Adrenal gland (tissue), 19 donors: ENCODE measurements at regions of chr1 and their contacts with region 1.

Region 1: DNA sequence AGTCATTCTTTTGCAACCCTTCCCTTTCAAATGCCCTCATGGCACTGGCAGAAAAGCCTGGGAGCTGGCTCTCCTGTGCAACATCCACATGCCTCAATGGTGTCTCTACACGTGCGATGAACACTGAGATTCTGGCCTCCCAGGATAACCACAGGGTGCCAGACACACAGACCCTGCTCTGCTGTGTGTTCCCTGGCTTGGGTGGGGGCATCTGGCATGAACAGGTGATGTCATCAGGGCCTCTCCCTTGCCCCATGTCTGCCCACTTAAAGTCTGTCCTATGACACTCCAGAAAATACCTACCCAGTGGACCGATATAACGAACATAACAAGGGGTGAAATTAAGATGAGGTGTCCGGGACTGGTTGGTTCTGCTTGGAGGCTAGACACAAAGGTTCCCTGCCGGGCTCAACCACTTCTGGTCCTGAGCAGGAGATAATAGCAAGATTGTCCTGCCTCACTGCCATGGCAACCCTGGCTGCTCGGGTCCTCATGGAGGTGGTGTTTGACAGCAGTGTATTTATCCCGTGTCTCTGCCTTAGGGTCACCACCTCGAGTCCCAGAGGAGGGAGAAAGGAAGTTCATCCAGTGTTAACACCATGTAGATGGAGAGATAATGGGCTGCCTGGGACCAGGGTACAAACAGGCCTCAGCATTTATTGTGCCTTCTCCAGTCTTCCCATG is 19.3 kb downstream of the INSRR start:
- DNase-seq: no peak
- H3K4me3 ChIP-seq: no peak overlapping the region
- H3K27ac ChIP-seq: no peak overlapping the region
- H3K4me1 ChIP-seq: no peaks in the 10 kb centered on the region
- H3K27me3 ChIP-seq: peaks cover 17% of the 10 kb centered on the region
- CTCF ChIP-seq: no peak
- POLR2A ChIP-seq: no peak

Region 2: DNA sequence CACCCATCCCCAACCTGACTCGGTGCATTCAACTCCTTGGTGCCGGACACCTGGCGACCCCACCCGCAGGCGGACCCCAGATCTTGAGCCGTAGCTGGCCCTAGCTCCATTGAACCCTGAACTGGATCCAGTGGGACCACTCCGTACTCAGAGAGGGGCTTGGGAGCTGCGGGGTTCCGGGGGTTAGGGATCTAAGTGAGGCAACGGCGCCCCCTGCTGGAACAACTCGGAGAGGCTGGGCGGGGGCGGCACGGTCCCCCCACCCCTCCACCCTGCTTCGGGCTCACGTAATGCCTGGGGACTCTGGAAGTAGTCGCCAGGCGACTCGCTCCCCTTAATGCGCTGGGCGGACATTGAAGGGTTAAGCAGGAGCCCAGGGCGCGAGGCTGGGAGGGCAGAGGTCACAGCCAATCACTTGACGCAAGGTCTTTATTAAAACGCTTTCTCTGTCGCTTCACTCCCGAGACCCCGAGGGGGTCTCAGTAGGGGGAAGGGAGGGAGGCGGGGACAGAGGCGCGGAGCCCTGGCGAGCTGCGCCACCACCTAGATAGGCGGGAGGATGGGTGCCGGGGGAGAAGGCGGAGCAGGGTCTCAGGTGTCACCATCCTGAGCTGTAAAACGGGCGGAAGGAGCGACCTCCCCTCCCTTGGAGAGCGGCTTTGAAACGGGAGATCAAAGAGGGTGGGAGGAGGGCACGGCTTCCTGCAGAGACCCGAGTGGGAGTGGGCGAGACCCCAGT is 133.5 kb before region 1 on chr1:
- intact Hi-C with region 1: no loop called
- DNase-seq: peak; percentile 36 to 82 (median 62)
- H3K4me3 ChIP-seq: peak overlapping the region in 3 of 4 donors; percentile 7 to 59 (median 31)
- H3K27ac ChIP-seq: peak overlapping the region; percentile 30 to 66 (median 52)
- H3K4me1 ChIP-seq: peaks cover 23 to 31% of the 10 kb centered on the region in 2 donors
- H3K27me3 ChIP-seq: no peaks in the 10 kb centered on the region
- CTCF ChIP-seq: peak; percentile 62 to 75 (median 70)
- POLR2A ChIP-seq: no peak

Region 3: GRCh38 chr1:156876281-156876680 is 36.7 kb after region 1 on chr1:
- intact Hi-C with region 1: no loop called
- DNase-seq: no peak
- H3K4me3 ChIP-seq: no peak overlapping the region
- H3K27ac ChIP-seq: no peak overlapping the region
- H3K4me1 ChIP-seq: no peaks in the 10 kb centered on the region
- H3K27me3 ChIP-seq: no peaks in the 10 kb centered on the region
- CTCF ChIP-seq: no peak
- POLR2A ChIP-seq: no peak

Region 4: DNA sequence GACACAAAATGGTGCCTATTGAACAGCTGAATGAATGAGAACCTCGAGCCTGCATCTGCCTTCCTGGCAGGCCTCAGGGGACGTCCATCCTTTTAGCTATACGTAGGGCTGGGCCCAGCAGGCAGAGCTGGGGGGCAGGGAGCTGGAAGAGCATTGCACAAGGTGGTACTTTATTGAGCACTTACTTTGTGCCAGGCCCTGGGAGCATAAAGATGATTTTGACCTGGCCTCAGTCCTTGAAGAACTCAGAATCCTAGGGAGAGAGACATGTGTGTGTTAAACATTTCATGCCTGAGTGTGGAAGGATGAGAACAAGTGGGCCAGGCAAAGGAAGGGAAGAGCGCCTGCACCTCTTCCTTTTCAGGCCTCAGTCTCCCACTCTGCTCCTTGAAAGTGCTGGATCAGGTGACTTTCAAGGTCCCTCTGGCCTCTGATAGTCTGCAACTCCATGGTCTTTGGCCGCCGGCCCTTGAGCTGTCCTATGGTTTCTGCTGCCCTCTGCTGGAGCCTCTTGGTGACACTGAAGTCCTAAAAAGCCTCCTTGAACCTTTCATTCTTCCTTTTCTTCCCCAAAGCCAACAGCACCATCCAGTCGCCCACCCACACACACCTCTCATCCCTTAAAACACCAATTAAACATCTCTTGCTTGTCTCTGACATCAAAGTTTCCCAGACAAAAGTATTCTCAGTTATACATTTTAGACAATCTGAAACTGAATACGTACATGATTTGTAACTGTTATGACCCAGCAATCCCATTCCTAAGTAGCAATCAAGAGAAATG is 50.4 kb after region 1 on chr1:
- intact Hi-C with region 1: loop called in 1 of 2 experiments (anchors 5 kb)
- DNase-seq: peak; percentile 71 to 95 (median 87)
- H3K4me3 ChIP-seq: no peak overlapping the region
- H3K27ac ChIP-seq: no peak overlapping the region
- H3K4me1 ChIP-seq: peaks cover 0 to 15% of the 10 kb centered on the region in 2 donors
- H3K27me3 ChIP-seq: peaks cover 8% of the 10 kb centered on the region
- CTCF ChIP-seq: peak; percentile 41 to 86 (median 80)
- POLR2A ChIP-seq: no peak